ENCODE measurements at regions of chr11 and their contacts with region 1.

Region 1: GRCh38 chr11:67345920-67346799 is 7.2 kb downstream of the POLD4 start:
- DNase-seq: no peak
- ATAC-seq: peak; percentile 48
- H3K4me3 ChIP-seq: no peak overlapping the region
- H3K4me3 Mint-ChIP-seq: peak overlapping the region; percentile 77
- H3K27ac ChIP-seq: peak overlapping the region; percentile 61 to 84
- H3K27ac Mint-ChIP-seq: peak overlapping the region; percentile 88
- H3K4me1 ChIP-seq: peaks cover 66 to 80% of the 10 kb centered on the region in 2 donors
- H3K4me1 Mint-ChIP-seq: peaks cover 70% of the 10 kb centered on the region
- H3K27me3 ChIP-seq: no peaks in the 10 kb centered on the region
- H3K27me3 Mint-ChIP-seq: no peaks in the 10 kb centered on the region
- CTCF ChIP-seq: peak; percentile 79

Region 2: GRCh38 chr11:66292550-66293323 is 1053.4 kb before region 1 on chr11:
- CTCF ChIA-PET with region 1: no interaction called
- POLR2A ChIA-PET with region 1: no interaction called
- intact Hi-C with region 1: no loop called
- DNase-seq: peak; percentile 42
- ATAC-seq: no peak
- H3K4me3 ChIP-seq: no peak overlapping the region
- H3K4me3 Mint-ChIP-seq: peak overlapping the region; percentile 80
- H3K27ac ChIP-seq: no peak overlapping the region
- H3K27ac Mint-ChIP-seq: no peak overlapping the region
- H3K4me1 ChIP-seq: peaks cover 33% of the 10 kb centered on the region in 2 donors
- H3K4me1 Mint-ChIP-seq: peaks cover 30% of the 10 kb centered on the region
- H3K27me3 ChIP-seq: peaks cover 2 to 33% (median 15%) of the 10 kb centered on the region in 4 experiments
- H3K27me3 Mint-ChIP-seq: peaks cover 18% of the 10 kb centered on the region
- CTCF ChIP-seq: no peak

Region 3: GRCh38 chr11:67082035-67082791 is 263.9 kb before region 1 on chr11:
- CTCF ChIA-PET with region 1: interaction called, 10 read pairs
- POLR2A ChIA-PET with region 1: interaction called, 4 read pairs
- intact Hi-C with region 1: no loop called
- DNase-seq: peak; percentile 43
- ATAC-seq: no peak
- H3K4me3 ChIP-seq: peak overlapping the region in 1 of 5 experiments; percentile 33
- H3K4me3 Mint-ChIP-seq: peak overlapping the region; percentile 54
- H3K27ac ChIP-seq: no peak overlapping the region
- H3K27ac Mint-ChIP-seq: no peak overlapping the region
- H3K4me1 ChIP-seq: peaks cover 11 to 12% of the 10 kb centered on the region in 2 donors
- H3K4me1 Mint-ChIP-seq: peaks cover 13% of the 10 kb centered on the region
- H3K27me3 ChIP-seq: peaks cover 0 to 8% (median 2%) of the 10 kb centered on the region in 4 experiments
- H3K27me3 Mint-ChIP-seq: peaks cover 9% of the 10 kb centered on the region
- CTCF ChIP-seq: no peak

Region 4: GRCh38 chr11:67118801-67119584 is 227.2 kb before region 1 on chr11 and contains the start of gene KDM2A:
- CTCF ChIA-PET with region 1: no interaction called
- POLR2A ChIA-PET with region 1: no interaction called
- intact Hi-C with region 1: loop called (anchors 10 kb)
- DNase-seq: peak; percentile 100
- ATAC-seq: peak; percentile 77
- H3K4me3 ChIP-seq: peak within 1 kb of the TSS; percentile 73 to 96 (median 89)
- H3K4me3 Mint-ChIP-seq: peak within 1 kb of the TSS; percentile 95
- H3K27ac ChIP-seq: peak within 1 kb of the TSS; percentile 79 to 81
- H3K27ac Mint-ChIP-seq: peak within 1 kb of the TSS; percentile 89
- H3K4me1 ChIP-seq: peaks cover 13 to 36% of the 10 kb centered on the region in 2 donors
- H3K4me1 Mint-ChIP-seq: peaks cover 38% of the 10 kb centered on the region
- H3K27me3 ChIP-seq: no peaks in the 10 kb centered on the region
- H3K27me3 Mint-ChIP-seq: no peaks in the 10 kb centered on the region
- CTCF ChIP-seq: peak; percentile 41
- total RNA-seq, gene KDM2A: 229 and 243 TPM in 2 replicates

Region 5: GRCh38 chr11:67317205-67317887 is 28.8 kb before region 1 on chr11:
- CTCF ChIA-PET with region 1: interaction called, 76 read pairs
- POLR2A ChIA-PET with region 1: interaction called, 5 read pairs
- intact Hi-C with region 1: no loop called
- DNase-seq: peak; percentile 99
- ATAC-seq: peak; percentile 83
- H3K4me3 ChIP-seq: peak overlapping the region; percentile 77 to 92 (median 87)
- H3K4me3 Mint-ChIP-seq: peak overlapping the region; percentile 89
- H3K27ac ChIP-seq: peak overlapping the region; percentile 46 to 78
- H3K27ac Mint-ChIP-seq: peak overlapping the region; percentile 97
- H3K4me1 ChIP-seq: peaks cover 22 to 33% of the 10 kb centered on the region in 2 donors
- H3K4me1 Mint-ChIP-seq: peaks cover 21% of the 10 kb centered on the region
- H3K27me3 ChIP-seq: no peaks in the 10 kb centered on the region
- H3K27me3 Mint-ChIP-seq: no peaks in the 10 kb centered on the region
- CTCF ChIP-seq: peak; percentile 81

Region 6: DNA sequence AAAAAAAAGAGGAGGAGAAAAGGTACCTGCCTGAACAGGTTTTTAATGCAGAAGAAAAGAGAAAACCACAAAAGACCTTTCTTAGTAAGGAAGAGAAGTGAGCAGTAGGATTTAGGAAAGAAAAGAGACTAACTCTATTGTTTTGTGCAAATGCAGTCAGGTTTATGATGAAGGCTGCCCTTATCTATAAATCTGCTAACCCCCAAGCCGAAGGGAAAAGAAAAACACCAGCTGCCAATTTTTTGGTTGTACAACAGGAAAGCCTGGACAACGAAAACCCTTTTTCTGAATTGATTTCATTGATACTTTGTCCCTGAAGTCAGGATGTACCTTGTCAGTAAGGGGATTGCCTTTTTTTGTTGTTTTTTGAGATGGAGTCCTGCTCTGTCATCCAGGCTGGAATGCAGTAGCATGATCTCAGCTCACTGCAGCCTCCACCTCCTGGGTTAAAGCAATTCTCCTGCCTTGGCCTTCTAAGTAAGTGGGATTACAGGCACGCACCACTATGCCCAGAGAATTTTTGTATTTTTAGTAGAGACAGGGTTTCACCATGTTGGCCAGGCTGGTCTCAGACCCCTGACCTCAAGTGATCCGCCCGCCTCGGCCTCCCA is 14.0 kb before region 1 on chr11:
- CTCF ChIA-PET with region 1: interaction called, 2,379 read pairs
- POLR2A ChIA-PET with region 1: no interaction called
- intact Hi-C with region 1: no loop called
- DNase-seq: no peak
- ATAC-seq: no peak
- H3K4me3 ChIP-seq: no peak overlapping the region
- H3K4me3 Mint-ChIP-seq: no peak overlapping the region
- H3K27ac ChIP-seq: no peak overlapping the region
- H3K27ac Mint-ChIP-seq: no peak overlapping the region
- H3K4me1 ChIP-seq: no peaks in the 10 kb centered on the region
- H3K4me1 Mint-ChIP-seq: no peaks in the 10 kb centered on the region
- H3K27me3 ChIP-seq: no peaks in the 10 kb centered on the region
- H3K27me3 Mint-ChIP-seq: no peaks in the 10 kb centered on the region
- CTCF ChIP-seq: no peak

Region 7: DNA sequence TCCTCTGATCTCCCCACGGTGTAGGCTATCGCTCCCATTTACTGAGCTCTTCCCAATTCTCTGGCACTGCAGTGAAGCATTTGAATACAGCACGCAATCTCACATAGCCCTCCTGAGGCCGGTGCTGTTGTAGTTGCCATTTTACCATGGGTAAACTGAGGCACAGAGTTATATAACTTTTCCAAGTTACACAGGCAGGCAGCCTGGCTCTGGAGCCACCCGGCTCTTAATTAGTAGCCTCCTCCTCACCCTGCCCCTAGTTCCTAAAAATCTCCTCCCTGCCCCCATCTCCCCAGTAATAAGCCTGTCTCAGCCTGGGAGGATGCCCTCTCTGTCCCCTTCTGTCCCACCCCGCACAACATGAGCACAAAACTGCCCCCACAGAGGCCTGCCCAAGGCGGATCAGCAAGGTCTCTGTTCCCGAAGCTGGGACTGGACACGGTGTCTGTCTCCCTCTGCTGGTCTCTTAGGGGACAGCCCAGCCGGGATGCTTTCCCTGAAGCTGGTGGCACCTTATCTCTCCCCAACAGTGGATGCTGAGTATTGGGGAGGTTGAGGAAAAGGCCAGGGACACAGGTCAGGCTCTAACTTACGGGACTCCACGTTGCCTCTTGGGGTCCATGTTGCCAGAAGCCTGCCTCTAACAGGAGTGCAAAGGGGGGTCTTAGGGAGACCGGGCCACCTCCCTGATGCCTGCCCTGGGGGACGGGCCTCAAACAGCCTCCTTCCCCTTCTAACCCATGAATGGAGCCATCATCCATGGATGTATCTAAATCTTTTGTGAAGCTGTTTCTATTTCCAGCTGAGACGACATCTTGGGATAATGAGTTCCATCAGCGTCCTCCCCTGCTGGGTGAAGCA is 36.3 kb after region 1 on chr11:
- CTCF ChIA-PET with region 1: interaction called, 2,379 read pairs
- POLR2A ChIA-PET with region 1: interaction called, 323 read pairs
- intact Hi-C with region 1: loop called (anchors 1 kb)
- DNase-seq: peak; percentile 88
- ATAC-seq: peak; percentile 86
- H3K4me3 ChIP-seq: no peak overlapping the region
- H3K4me3 Mint-ChIP-seq: peak overlapping the region; percentile 84
- H3K27ac ChIP-seq: peak overlapping the region in 1 of 2 donors; percentile 88
- H3K27ac Mint-ChIP-seq: peak overlapping the region; percentile 92
- H3K4me1 ChIP-seq: peaks cover 22 to 33% of the 10 kb centered on the region in 2 donors
- H3K4me1 Mint-ChIP-seq: peaks cover 22% of the 10 kb centered on the region
- H3K27me3 ChIP-seq: no peaks in the 10 kb centered on the region
- H3K27me3 Mint-ChIP-seq: no peaks in the 10 kb centered on the region
- CTCF ChIP-seq: peak; percentile 96

Region 8: GRCh38 chr11:67514116-67514515 is 168.0 kb after region 1 on chr11:
- CTCF ChIA-PET with region 1: no interaction called
- POLR2A ChIA-PET with region 1: no interaction called
- intact Hi-C with region 1: no loop called
- DNase-seq: no peak
- ATAC-seq: no peak
- H3K4me3 ChIP-seq: no peak overlapping the region
- H3K4me3 Mint-ChIP-seq: no peak overlapping the region
- H3K27ac ChIP-seq: no peak overlapping the region
- H3K27ac Mint-ChIP-seq: no peak overlapping the region
- H3K4me1 ChIP-seq: peaks cover under 1 to 1% of the 10 kb centered on the region in 2 donors
- H3K4me1 Mint-ChIP-seq: peaks cover 1% of the 10 kb centered on the region
- H3K27me3 ChIP-seq: peaks cover 0 to 27% (median 5%) of the 10 kb centered on the region in 4 experiments
- H3K27me3 Mint-ChIP-seq: peaks cover 29% of the 10 kb centered on the region
- CTCF ChIP-seq: no peak

Measured in B cell (primary cell).